Activated CD8-positive, alpha-beta T cell treated with anti-CD3 and anti-CD28 coated beads for 36 hours (primary cell): ENCODE measurements at regions of chr15 and their contacts with region 1.

Region 1: GRCh38 chr15:48285329-48286214 is 45.7 kb upstream of the DUT start:
- DNase-seq: peak; percentile 61
- ATAC-seq: peak; percentile 70
- H3K4me3 Mint-ChIP-seq: no peak overlapping the region
- H3K27ac Mint-ChIP-seq: no peak overlapping the region
- H3K4me1 Mint-ChIP-seq: peaks cover 2% of the 10 kb centered on the region
- H3K27me3 Mint-ChIP-seq: peaks cover 5% of the 10 kb centered on the region
- CTCF ChIP-seq: peak; percentile 80

Region 2: GRCh38 chr15:48267766-48268165 is 17.8 kb before region 1 on chr15:
- CTCF ChIA-PET with region 1: interaction called, 10 read pairs
- POLR2A ChIA-PET with region 1: no interaction called
- intact Hi-C with region 1: no loop called
- DNase-seq: no peak
- ATAC-seq: no peak
- H3K4me3 Mint-ChIP-seq: no peak overlapping the region
- H3K27ac Mint-ChIP-seq: no peak overlapping the region
- H3K4me1 Mint-ChIP-seq: peaks cover 2% of the 10 kb centered on the region
- H3K27me3 Mint-ChIP-seq: peaks cover 1% of the 10 kb centered on the region
- CTCF ChIP-seq: no peak

Region 3: DNA sequence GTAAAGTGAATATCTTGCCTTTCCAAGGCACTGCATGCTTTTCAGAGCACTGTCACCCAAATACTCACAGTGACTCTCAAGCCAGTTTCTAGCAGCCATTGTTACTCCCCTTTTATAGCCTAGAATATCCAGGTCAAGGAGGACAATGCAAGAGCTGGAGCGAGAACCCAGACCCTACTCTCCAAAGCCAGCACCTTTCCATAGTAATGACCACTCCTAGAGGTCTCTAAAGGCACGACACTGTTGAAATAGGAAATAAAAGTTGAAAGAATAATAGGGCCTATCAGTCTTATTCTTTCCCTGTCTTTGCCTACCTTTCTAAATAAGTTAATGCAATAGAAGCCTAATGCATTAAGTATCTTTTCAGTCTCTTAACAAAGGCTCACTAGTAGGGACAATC is 12.1 kb after region 1 on chr15:
- CTCF ChIA-PET with region 1: interaction called, 18 read pairs
- POLR2A ChIA-PET with region 1: no interaction called
- intact Hi-C with region 1: no loop called
- DNase-seq: no peak
- ATAC-seq: no peak
- H3K4me3 Mint-ChIP-seq: no peak overlapping the region
- H3K27ac Mint-ChIP-seq: no peak overlapping the region
- H3K4me1 Mint-ChIP-seq: no peaks in the 10 kb centered on the region
- H3K27me3 Mint-ChIP-seq: no peaks in the 10 kb centered on the region
- CTCF ChIP-seq: no peak

Region 4: GRCh38 chr15:48367483-48367882 is 81.9 kb after region 1 on chr15:
- CTCF ChIA-PET with region 1: no interaction called
- POLR2A ChIA-PET with region 1: no interaction called
- intact Hi-C with region 1: no loop called
- DNase-seq: no peak
- ATAC-seq: no peak
- H3K4me3 Mint-ChIP-seq: no peak overlapping the region
- H3K27ac Mint-ChIP-seq: no peak overlapping the region
- H3K4me1 Mint-ChIP-seq: no peaks in the 10 kb centered on the region
- H3K27me3 Mint-ChIP-seq: peaks cover 5% of the 10 kb centered on the region
- CTCF ChIP-seq: no peak